Ovary (tissue), 10 donors: ENCODE measurements at regions of chr10 and their contacts with region 1.

Region 1: DNA sequence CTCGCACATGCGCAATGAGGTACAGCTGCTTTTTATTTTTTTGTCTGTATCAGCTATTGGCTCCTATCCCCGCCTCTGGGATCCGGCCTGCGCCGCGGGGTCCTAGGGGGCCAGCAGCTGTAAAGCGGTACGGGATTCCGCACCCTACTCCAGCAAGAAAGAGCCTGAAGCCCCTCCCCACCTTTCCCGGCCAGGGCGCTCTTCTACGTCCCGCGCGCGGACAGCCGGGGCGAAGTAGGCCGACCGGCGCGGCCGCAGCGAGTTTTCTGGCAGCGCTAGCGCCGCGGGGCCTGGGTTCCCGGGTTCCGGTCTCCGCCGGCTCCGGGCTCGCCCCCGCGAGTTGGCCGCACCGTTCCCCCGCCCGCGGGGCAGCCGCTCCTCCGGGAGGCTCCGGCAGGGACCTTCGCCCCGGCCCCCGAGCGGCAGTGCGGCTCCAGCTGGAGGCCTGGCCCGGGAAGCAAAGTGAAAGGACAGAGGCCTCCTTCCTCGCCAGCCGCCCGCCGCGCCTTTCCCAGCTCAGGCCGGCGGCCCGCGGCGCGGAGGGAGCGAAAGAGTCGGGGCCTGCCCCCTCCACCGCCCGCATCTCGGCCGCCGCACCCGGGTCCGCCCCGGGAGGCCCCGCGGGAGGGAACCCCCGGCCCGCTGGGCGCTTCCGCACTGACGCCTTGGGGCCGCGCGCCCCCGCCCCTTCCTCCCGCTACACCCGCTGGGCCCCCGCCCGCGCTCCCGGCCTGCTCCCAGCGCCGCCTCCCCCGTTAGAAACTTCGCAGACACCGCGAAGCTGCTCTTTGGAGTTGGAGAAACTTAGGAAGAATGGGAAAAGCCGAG is 4.7 kb upstream of the SPAG6 start:
- DNase-seq: peak; percentile 72 to 84 (median 82)
- H3K4me3 ChIP-seq: peak overlapping the region; percentile 80
- H3K27ac ChIP-seq: peak overlapping the region; percentile 94
- H3K4me1 ChIP-seq: peaks cover 1% of the 10 kb centered on the region
- H3K27me3 ChIP-seq: peaks cover 12% of the 10 kb centered on the region
- CTCF ChIP-seq: peak in 1 of 3 donors; percentile 20
- EP300 ChIP-seq: no peak
- POLR2A ChIP-seq: peak; percentile 82

Region 2: DNA sequence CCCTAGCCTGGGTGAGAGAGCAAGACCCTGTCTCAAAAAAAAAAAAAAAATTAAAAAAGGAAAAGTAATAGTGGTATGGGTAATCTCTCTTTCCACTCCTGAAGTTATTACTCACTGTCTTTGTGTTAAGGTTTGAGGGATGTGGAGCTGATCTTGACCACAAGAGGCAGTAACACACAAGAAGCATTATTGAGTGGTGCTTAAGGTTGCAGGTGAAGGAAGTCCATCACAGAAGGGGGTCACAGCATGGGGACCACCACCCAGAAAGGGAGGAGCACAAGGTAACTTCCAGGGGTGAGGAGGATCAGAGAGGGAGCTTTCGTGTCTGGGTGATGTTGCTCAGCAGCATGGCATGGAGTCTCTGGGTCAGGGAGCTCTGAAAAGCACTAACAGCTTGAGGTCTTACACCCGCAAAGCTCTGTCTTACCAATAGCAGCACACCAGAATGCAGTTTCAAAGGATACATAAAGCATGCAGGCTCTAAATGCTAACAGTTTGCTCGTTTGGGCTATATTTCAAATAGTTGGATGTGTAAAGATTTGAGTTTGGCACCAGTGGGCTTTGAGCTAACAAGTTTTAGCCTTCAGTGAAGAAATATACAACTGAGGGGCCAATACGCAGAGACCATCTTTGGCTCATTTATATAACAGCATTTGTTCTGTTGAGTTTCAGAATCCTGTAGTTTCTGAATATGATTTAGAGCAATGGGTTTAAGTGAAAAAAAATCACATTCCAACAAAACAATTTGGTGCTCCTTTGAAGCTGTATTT is 236.7 kb before region 1 on chr10:
- intact Hi-C with region 1: no loop called
- DNase-seq: no peak
- H3K4me3 ChIP-seq: no peak overlapping the region
- H3K27ac ChIP-seq: no peak overlapping the region
- H3K4me1 ChIP-seq: no peaks in the 10 kb centered on the region
- H3K27me3 ChIP-seq: no peaks in the 10 kb centered on the region
- CTCF ChIP-seq: no peak
- EP300 ChIP-seq: no peak
- POLR2A ChIP-seq: no peak

Region 3: GRCh38 chr10:22251751-22252223 is 88.8 kb before region 1 on chr10:
- intact Hi-C with region 1: loop called in 1 of 4 experiments (anchors 5 kb)
- DNase-seq: peak; percentile 59 to 77 (median 70)
- H3K4me3 ChIP-seq: peak overlapping the region; percentile 62
- H3K27ac ChIP-seq: peak overlapping the region; percentile 91 to 99
- H3K4me1 ChIP-seq: no peaks in the 10 kb centered on the region
- H3K27me3 ChIP-seq: no peaks in the 10 kb centered on the region
- CTCF ChIP-seq: no peak
- EP300 ChIP-seq: no peak
- POLR2A ChIP-seq: no peak

Region 4: GRCh38 chr10:22550732-22551131 is 210.2 kb after region 1 on chr10:
- intact Hi-C with region 1: no loop called
- DNase-seq: peak in 4 of 5 donors; percentile 27 to 54 (median 32)
- H3K4me3 ChIP-seq: no peak overlapping the region
- H3K27ac ChIP-seq: no peak overlapping the region
- H3K4me1 ChIP-seq: peaks cover 1% of the 10 kb centered on the region
- H3K27me3 ChIP-seq: no peaks in the 10 kb centered on the region
- CTCF ChIP-seq: no peak
- EP300 ChIP-seq: no peak
- POLR2A ChIP-seq: no peak